ENCODE measurements at regions of chrX and their contacts with region 1.

Region 1: GRCh38 chrX:103918581-103919269 is 43.7 kb upstream of the TMSB15B start:
- DNase-seq: peak; percentile 55 to 73 (median 62)
- H3K4me3 ChIP-seq: peak overlapping the region; percentile 36 to 70
- H3K4me3 Mint-ChIP-seq: peak overlapping the region; percentile 88 to 97 (median 94)
- H3K27ac ChIP-seq: peak overlapping the region; percentile 74
- H3K27ac Mint-ChIP-seq: peak overlapping the region; percentile 86 to 96 (median 91)
- H3K4me1 ChIP-seq: peaks cover 27% of the 10 kb centered on the region
- H3K4me1 Mint-ChIP-seq: peaks cover 21 to 35% (median 30%) of the 10 kb centered on the region in 4 donors
- H3K27me3 ChIP-seq: no peaks in the 10 kb centered on the region
- H3K27me3 Mint-ChIP-seq: no peaks in the 10 kb centered on the region

Region 2: DNA sequence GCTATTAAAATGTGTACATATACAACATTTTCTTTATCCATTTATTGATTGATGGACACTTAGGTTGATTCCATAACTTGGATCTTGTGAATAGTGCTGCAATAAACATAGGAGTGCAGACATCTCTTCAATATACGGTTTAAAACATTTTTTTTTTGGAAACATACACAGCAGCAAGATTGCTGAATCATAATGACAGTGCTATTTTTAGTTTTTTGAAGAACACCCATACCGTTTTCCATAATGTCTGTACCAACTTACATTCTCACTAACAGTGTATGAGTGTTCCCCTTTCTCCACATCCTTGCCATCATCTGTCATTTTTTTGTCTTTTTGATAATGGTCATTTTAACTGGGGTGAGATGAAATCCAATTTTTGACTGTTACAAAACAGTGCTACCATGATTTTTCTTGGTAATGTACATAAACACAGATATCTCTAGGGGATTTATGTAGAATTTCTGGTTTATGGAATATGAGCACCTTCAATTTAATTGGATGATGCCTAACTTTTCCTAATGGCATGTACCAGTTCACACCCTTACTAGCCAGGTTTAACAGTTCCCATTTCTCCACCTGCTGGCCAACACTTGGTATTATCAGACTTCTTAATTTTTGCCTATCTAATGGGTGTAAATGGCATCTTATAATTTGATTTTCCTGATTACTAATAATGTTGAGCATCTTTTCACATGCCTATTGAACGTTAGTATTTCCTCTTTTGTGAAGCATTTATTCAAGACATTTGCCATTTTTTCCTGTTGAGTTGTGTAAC is 22.7 kb after region 1 on chrX:
- CTCF ChIA-PET with region 1: interaction called, 32 read pairs
- POLR2A ChIA-PET with region 1: interaction called, 4 read pairs
- intact Hi-C with region 1: loop called (anchors 1 kb)
- DNase-seq: peak in 3 of 5 donors; percentile 12 to 22 (median 14)
- H3K4me3 ChIP-seq: no peak overlapping the region
- H3K4me3 Mint-ChIP-seq: no peak overlapping the region
- H3K27ac ChIP-seq: no peak overlapping the region
- H3K27ac Mint-ChIP-seq: peak overlapping the region in 1 of 7 donors; percentile 8
- H3K4me1 ChIP-seq: no peaks in the 10 kb centered on the region
- H3K4me1 Mint-ChIP-seq: peaks cover 9 to 26% (median 13%) of the 10 kb centered on the region in 4 donors
- H3K27me3 ChIP-seq: no peaks in the 10 kb centered on the region
- H3K27me3 Mint-ChIP-seq: no peaks in the 10 kb centered on the region

Region 3: DNA sequence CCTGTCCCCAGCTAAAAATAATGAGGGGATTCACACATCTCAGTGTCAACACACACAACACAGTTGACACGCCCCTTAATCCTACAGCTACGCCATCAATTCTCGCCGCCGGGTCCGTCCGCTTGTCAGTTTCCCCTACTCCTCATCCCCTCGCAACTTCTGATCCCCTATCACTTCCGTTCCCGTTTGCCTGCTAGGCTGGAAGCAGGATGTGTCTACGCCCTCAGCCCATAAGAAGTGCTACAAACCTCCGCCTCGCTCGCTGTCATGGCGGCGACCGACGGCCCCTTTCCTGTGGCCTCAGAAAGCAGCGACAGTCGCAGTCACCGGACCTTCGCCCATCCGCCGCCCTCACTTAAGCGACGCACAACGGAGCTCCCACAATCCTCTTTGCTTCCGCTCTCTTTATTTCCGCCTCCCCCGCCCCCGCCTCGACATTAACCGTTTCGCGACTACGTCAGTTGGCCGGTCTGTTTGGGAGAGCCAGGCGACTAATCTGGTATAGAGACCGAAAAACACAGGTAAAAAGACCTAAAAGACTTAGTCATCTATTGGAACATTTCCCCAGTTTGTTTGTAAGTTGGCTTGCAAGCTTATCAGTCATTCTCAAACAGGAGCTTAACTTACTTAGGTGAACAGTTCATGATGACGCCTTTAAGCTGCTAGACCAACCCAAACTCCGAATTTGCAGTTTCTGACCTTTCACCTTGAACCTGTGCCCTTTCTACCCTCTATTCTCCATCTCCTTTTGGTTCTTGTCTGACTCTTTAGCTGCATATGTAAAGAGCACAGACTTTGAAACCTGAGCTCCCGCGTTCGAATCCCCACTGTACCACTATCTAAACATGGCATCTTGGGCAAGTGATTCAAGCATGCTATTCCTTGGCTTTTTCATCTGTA is 238.2 kb after region 1 on chrX and contains the start of gene SLC25A53:
- CTCF ChIA-PET with region 1: no interaction called
- POLR2A ChIA-PET with region 1: interaction called, 14 read pairs
- intact Hi-C with region 1: loop called (anchors 1 kb)
- DNase-seq: peak; percentile 77 to 89 (median 81)
- H3K4me3 ChIP-seq: peak within 1 kb of the TSS; percentile 71 to 78
- H3K4me3 Mint-ChIP-seq: peak within 1 kb of the TSS; percentile 93 to 100 (median 96)
- H3K27ac ChIP-seq: peak within 1 kb of the TSS; percentile 73
- H3K27ac Mint-ChIP-seq: peak within 1 kb of the TSS; percentile 96 to 100 (median 99)
- H3K4me1 ChIP-seq: peaks cover 19% of the 10 kb centered on the region
- H3K4me1 Mint-ChIP-seq: peaks cover 4 to 33% (median 6%) of the 10 kb centered on the region in 4 donors
- H3K27me3 ChIP-seq: no peaks in the 10 kb centered on the region
- H3K27me3 Mint-ChIP-seq: no peaks in the 10 kb centered on the region
- total RNA-seq, gene SLC25A53: 20.9 to 21.0 TPM

Measured in CD4-positive, alpha-beta memory T cell (primary cell).